Sigmoid colon (tissue), 7 donors: ENCODE measurements at regions of chr14 and their contacts with region 1.

Region 1: DNA sequence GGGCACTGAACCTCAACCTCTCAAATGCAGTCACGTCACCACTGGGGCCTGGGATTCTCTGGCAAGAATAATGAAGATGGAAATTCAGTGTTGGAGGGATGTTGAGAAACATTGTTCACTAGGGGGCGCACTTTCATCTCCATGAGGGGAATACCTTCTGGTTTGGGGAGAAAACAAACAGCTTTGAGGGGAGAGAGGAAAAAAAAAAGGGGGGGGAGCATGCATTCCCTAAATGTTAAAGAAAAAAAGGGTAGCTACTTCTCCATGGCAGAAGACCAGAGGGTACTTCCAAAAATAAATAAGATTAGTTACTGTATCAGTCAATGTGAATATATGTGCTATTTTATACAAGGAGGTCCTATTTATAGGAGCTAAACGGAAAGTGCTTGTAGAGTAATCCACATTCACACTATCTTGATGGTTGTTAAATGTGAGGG is 5.8 kb upstream of the TBPL2 start:
- DNase-seq: peak; percentile 63
- H3K4me3 ChIP-seq: no peak overlapping the region
- H3K27ac ChIP-seq: no peak overlapping the region
- H3K4me1 ChIP-seq: peaks cover 0 to 14% (median 12%) of the 10 kb centered on the region in 4 donors
- H3K27me3 ChIP-seq: no peaks in the 10 kb centered on the region
- CTCF ChIP-seq: peak in 3 of 4 experiments; percentile 49 to 55 (median 50)
- EP300 ChIP-seq: no peak
- POLR2A ChIP-seq: no peak

Region 2: GRCh38 chr14:55514819-55515490 is 68.7 kb after region 1 on chr14:
- intact Hi-C with region 1: no loop called
- DNase-seq: no peak
- H3K4me3 ChIP-seq: peak overlapping the region in 3 of 4 donors; percentile 4 to 29 (median 25)
- H3K27ac ChIP-seq: peak overlapping the region in 3 of 4 donors; percentile 10 to 57 (median 50)
- H3K4me1 ChIP-seq: peaks cover 0 to 25% (median 10%) of the 10 kb centered on the region in 4 donors
- H3K27me3 ChIP-seq: no peaks in the 10 kb centered on the region
- CTCF ChIP-seq: no peak
- EP300 ChIP-seq: no peak
- POLR2A ChIP-seq: no peak

Region 3: GRCh38 chr14:55579724-55580469 is 133.7 kb after region 1 on chr14 and contains the start of gene KTN1:
- intact Hi-C with region 1: loop called (anchors 10 kb)
- DNase-seq: peak; percentile 90
- H3K4me3 ChIP-seq: peak within 1 kb of the TSS; percentile 88 to 95 (median 94)
- H3K27ac ChIP-seq: peak within 1 kb of the TSS; percentile 95 to 99 (median 96)
- H3K4me1 ChIP-seq: peaks cover 0 to 43% (median 37%) of the 10 kb centered on the region in 4 donors
- H3K27me3 ChIP-seq: no peaks in the 10 kb centered on the region
- CTCF ChIP-seq: no peak
- EP300 ChIP-seq: no peak
- POLR2A ChIP-seq: no peak
- total RNA-seq, gene KTN1: 120 to 174 (median 150) TPM